ENCODE measurements at regions of chr11 and their contacts with region 1.

Region 1: DNA sequence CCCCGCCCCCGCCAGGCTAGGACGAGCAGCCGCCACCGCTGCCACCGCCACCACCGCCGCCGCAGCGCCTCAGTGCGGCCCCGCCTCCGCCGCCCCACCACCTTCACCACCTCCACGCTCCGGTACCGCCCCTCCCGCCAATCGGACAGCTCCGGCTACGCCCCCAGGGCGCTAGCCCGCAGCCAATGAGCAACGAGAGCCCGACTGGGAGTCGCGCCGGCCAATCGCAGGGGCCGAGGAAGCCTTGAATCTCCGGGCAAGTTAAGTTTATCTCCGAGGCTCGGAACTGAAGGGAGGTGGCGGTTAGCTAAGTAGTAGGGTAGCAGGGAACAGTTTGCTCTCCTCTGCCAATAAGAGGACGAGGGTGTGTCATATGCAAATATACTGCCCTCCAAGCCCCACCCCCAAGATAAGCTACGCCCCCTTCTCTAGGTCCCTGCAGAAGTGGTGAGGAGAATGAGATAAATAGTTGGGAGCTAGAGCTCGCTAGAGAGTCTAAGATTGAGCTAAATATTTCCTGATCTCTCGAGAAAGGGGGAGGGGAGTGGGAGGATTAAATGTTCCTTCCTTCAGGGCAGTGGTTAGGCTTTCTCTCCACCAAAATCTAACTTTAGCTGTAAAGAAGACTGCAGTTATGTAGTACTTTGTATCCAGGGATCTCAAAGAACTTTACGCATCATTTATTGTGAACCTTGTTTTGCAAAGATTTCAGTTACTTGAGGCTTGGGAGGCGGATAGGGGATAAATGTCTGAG is at the start of gene SESN3:
- DNase-seq: peak; percentile 96
- ATAC-seq: peak; percentile 85
- H3K4me3 Mint-ChIP-seq: no peak within 1 kb of the TSS
- H3K27ac Mint-ChIP-seq: peak within 1 kb of the TSS; percentile 92
- H3K4me1 Mint-ChIP-seq: peaks cover 58% of the 10 kb centered on the region
- H3K27me3 Mint-ChIP-seq: no peaks in the 10 kb centered on the region
- CTCF ChIP-seq: no peak
- total RNA-seq, gene SESN3: 82.3 and 87.2 TPM in 2 replicates

Region 2: GRCh38 chr11:95089620-95090542 is 141.4 kb before region 1 on chr11 and contains the start of gene ENDOD1:
- CTCF ChIA-PET with region 1: no interaction called
- POLR2A ChIA-PET with region 1: interaction called, 5 read pairs
- intact Hi-C with region 1: loop called (anchors 5 kb)
- DNase-seq: peak; percentile 88
- ATAC-seq: peak; percentile 93
- H3K4me3 Mint-ChIP-seq: peak within 1 kb of the TSS; percentile 92
- H3K27ac Mint-ChIP-seq: peak within 1 kb of the TSS; percentile 94
- H3K4me1 Mint-ChIP-seq: peaks cover 56% of the 10 kb centered on the region
- H3K27me3 Mint-ChIP-seq: no peaks in the 10 kb centered on the region
- CTCF ChIP-seq: no peak
- total RNA-seq, gene ENDOD1: 9.5 and 9.8 TPM in 2 replicates

Region 3: DNA sequence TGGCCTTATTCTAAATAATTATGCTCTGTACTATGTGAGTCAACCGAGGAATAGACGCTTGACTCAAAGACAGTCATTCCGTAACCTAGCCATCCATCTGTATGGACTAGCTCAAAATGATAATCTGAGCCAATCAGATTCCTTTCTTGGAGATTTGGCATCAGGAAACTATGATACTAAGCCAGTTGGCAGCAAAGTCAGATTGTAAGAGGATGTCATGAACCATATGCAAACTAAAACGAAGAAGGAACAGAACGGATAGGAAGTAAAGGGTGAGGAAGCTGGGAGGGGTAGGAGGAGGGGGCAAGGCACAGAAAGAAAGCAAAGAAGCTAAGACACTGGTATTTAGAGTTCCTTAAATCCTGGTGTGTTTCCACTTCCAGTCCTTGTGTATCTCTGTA is 10.4 kb after region 1 on chr11:
- CTCF ChIA-PET with region 1: interaction called, 6 read pairs
- POLR2A ChIA-PET with region 1: interaction called, 81 read pairs
- intact Hi-C with region 1: loop called (anchors 1 kb)
- DNase-seq: no peak
- ATAC-seq: peak; percentile 75
- H3K4me3 Mint-ChIP-seq: peak overlapping the region; percentile 60
- H3K27ac Mint-ChIP-seq: peak overlapping the region; percentile 90
- H3K4me1 Mint-ChIP-seq: peaks cover 39% of the 10 kb centered on the region
- H3K27me3 Mint-ChIP-seq: no peaks in the 10 kb centered on the region
- CTCF ChIP-seq: no peak

Region 4: GRCh38 chr11:95296621-95297025 is 65.3 kb after region 1 on chr11:
- CTCF ChIA-PET with region 1: interaction called, 14 read pairs
- POLR2A ChIA-PET with region 1: interaction called, 88 read pairs
- intact Hi-C with region 1: loop called (anchors 1 kb)
- DNase-seq: peak; percentile 41
- ATAC-seq: peak; percentile 89
- H3K4me3 Mint-ChIP-seq: peak overlapping the region; percentile 79
- H3K27ac Mint-ChIP-seq: peak overlapping the region; percentile 89
- H3K4me1 Mint-ChIP-seq: peaks cover 50% of the 10 kb centered on the region
- H3K27me3 Mint-ChIP-seq: no peaks in the 10 kb centered on the region
- CTCF ChIP-seq: no peak

Region 5: DNA sequence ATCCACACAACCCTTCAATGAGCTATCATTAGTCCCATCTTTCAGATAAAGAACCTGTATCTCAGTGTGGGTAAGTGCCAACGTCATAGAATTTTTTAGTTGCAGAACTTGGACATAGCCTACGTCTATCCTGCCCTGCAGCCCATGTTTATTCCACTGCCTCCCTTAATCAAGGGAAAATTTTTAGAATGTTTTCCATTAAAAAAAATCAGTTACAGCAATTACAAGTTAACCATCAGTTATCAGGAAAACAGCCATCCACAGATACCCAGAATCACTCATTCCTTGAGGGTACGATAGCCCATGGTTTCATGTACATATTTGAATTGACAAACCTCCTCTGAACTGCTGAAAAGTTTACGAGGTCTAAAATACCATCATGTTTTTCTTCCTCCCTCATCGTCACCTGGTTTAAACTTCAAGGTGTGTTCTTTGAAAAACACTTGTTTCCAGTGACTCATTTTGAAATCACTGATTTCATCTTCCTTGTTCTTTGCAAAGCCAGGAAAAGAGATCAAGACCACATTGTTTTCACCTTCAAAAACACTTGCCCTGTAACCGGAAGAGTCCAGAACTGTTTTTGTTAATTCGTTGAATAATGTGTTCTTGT is 457.4 kb after region 1 on chr11:
- CTCF ChIA-PET with region 1: no interaction called
- POLR2A ChIA-PET with region 1: interaction called, 22 read pairs
- intact Hi-C with region 1: no loop called
- DNase-seq: no peak
- ATAC-seq: no peak
- H3K4me3 Mint-ChIP-seq: no peak overlapping the region
- H3K27ac Mint-ChIP-seq: no peak overlapping the region
- H3K4me1 Mint-ChIP-seq: peaks cover under 1% of the 10 kb centered on the region
- H3K27me3 Mint-ChIP-seq: no peaks in the 10 kb centered on the region
- CTCF ChIP-seq: no peak

Region 6: DNA sequence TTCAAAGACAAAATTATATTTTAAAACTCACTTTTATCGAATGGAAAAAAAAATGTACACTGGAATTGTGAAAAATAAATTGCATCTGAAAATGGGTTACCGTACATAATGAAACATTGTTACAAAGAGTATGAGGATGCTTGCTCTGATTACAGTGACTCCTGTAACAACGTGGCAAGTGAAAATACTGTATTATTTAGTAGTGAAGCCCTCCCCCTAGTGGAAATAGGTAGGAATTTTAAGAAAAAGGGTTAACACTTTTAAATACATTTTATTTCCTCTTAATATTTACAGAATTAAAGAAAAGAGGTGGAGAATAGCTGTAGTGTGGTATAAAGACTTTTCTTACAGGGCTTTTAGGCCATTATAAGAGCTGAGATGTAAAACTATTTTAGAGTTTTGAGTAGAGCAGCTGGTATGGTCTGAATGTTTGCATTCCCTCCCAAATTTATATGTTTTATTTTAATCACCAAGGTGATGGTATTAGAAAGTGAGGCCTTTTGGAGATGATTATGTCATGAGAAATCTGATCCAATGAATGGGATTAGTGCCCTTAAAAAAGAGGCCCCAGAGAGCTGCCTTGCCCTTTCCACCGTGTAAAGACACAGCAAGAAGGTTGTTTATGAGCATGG is 533.1 kb after region 1 on chr11:
- CTCF ChIA-PET with region 1: interaction called, 18 read pairs
- POLR2A ChIA-PET with region 1: interaction called, 4 read pairs
- intact Hi-C with region 1: loop called (anchors 1 kb)
- DNase-seq: no peak
- ATAC-seq: peak; percentile 69
- H3K4me3 Mint-ChIP-seq: no peak overlapping the region
- H3K27ac Mint-ChIP-seq: no peak overlapping the region
- H3K4me1 Mint-ChIP-seq: peaks cover 23% of the 10 kb centered on the region
- H3K27me3 Mint-ChIP-seq: no peaks in the 10 kb centered on the region
- CTCF ChIP-seq: no peak